A673 (cell line): ENCODE measurements at regions of chr12 and their contacts with region 1.

Region 1: GRCh38 chr12:89524541-89525285 is at the start of gene GALNT4:
- DNase-seq: peak; percentile 94
- H3K4me3 ChIP-seq: peak within 1 kb of the TSS; percentile 82
- H3K27ac ChIP-seq: peak within 1 kb of the TSS; percentile 86
- H3K4me1 ChIP-seq: peaks cover 35% of the 10 kb centered on the region
- H3K27me3 ChIP-seq: no peaks in the 10 kb centered on the region
- CTCF ChIP-seq: peak; percentile 83
- total RNA-seq, gene GALNT4: 13.2 and 14.3 TPM in 2 replicates

Region 2: DNA sequence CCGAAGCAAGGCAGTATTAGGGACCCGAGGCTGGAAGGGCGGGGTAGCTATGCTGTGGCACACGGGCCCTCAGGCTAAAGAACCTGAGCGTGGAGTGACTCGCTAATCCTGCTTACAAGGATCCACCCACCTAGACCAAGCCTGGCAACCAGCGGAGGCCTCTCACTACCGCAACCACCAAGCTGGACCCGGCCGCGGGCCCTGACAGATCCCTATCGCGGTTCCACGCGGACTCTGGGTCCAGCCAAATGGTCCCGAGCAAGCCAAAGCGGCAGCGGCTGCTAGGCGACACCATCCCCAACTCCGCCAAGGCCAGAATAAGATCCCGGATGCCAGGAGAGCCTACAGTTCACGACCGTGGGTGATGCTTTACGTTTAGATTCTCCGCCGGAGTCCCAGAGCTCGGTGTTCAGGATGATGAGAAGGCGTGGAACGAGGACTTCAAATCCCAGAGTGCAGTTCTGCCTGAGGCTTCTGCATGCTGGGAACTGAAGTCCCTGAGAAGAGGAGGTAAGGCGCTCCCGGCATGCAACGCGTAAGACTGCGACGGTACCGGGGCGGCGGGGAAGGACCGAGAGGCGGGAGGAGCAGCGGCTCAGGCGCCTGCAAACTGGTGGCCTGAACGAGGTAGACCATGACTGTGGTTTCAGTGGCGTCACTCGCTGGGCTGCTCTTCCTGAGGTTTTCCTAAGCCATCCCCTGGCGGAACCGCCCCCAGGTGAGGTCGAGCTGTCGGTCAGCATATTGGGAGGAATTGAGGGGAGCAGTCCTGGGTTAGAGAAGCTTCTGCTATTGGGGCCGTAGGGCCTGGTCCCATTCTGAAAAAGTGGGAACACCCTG is 1382.7 kb before region 1 on chr12 and contains the starts of genes CEP290 and TMTC3:
- CTCF ChIA-PET with region 1: no interaction called
- POLR2A ChIA-PET with region 1: no interaction called
- intact Hi-C with region 1: loop called (anchors 5 kb)
- DNase-seq: peak; percentile 99
- H3K4me3 ChIP-seq: peak within 1 kb of the TSS; percentile 79
- H3K27ac ChIP-seq: peak within 1 kb of the TSS; percentile 71
- H3K4me1 ChIP-seq: peaks cover 22% of the 10 kb centered on the region
- H3K27me3 ChIP-seq: no peaks in the 10 kb centered on the region
- CTCF ChIP-seq: no peak
- total RNA-seq, gene CEP290: 27.2 and 27.3 TPM in 2 replicates
- total RNA-seq, gene TMTC3: 31.6 and 33.6 TPM in 2 replicates

Region 3: GRCh38 chr12:88638966-88639760 is 885.5 kb before region 1 on chr12:
- CTCF ChIA-PET with region 1: no interaction called
- POLR2A ChIA-PET with region 1: no interaction called
- intact Hi-C with region 1: loop called (anchors 10 kb)
- DNase-seq: peak; percentile 57
- H3K4me3 ChIP-seq: peak overlapping the region; percentile 23
- H3K27ac ChIP-seq: peak overlapping the region; percentile 80
- H3K4me1 ChIP-seq: peaks cover 21% of the 10 kb centered on the region
- H3K27me3 ChIP-seq: no peaks in the 10 kb centered on the region
- CTCF ChIP-seq: no peak

Region 4: GRCh38 chr12:89345830-89346740 is 178.6 kb before region 1 on chr12:
- CTCF ChIA-PET with region 1: no interaction called
- POLR2A ChIA-PET with region 1: no interaction called
- intact Hi-C with region 1: loop called (anchors 2 kb)
- DNase-seq: peak; percentile 99
- H3K4me3 ChIP-seq: peak overlapping the region; percentile 11
- H3K27ac ChIP-seq: peak overlapping the region; percentile 97
- H3K4me1 ChIP-seq: peaks cover 47% of the 10 kb centered on the region
- H3K27me3 ChIP-seq: no peaks in the 10 kb centered on the region
- CTCF ChIP-seq: no peak

Region 5: DNA sequence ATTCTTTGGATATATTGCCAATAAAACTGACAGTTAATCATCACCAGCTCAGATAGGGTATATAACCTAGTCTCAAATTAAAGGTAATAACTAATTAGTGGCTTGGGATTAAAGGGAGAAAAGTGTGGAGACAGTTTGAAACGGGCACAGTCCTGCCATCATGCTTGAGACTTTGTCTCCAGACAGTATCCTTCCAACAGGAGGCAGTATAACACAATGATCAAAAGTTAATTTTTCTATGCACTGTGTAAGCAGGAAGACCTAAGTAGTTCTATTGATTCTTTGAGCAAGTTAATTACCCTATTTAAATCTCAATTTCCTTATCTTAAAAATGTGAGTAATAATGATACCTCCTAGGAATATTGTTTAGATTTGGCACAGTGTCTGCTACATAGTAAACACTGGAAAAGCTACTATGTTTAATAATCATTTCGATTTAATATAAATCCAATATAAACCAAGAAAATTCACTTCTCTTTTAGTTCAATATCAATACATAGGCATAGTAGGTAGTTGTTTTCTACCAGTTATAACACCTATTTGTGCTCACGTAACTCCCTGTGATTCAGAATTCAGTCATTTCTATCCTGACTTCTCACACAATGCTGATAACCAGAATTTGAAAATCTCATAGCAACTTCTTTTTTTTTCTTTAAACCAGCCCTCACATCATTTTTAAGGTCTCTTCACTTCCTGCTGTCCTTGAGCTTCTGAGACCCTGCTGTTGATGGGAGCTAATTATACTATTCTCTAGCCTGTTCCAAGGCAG is 53.8 kb before region 1 on chr12:
- CTCF ChIA-PET with region 1: no interaction called
- POLR2A ChIA-PET with region 1: interaction called, 3 read pairs
- intact Hi-C with region 1: loop called (anchors 2 kb)
- DNase-seq: peak; percentile 73
- H3K4me3 ChIP-seq: no peak overlapping the region
- H3K27ac ChIP-seq: no peak overlapping the region
- H3K4me1 ChIP-seq: peaks cover 23% of the 10 kb centered on the region
- H3K27me3 ChIP-seq: no peaks in the 10 kb centered on the region
- CTCF ChIP-seq: peak; percentile 76

Region 6: DNA sequence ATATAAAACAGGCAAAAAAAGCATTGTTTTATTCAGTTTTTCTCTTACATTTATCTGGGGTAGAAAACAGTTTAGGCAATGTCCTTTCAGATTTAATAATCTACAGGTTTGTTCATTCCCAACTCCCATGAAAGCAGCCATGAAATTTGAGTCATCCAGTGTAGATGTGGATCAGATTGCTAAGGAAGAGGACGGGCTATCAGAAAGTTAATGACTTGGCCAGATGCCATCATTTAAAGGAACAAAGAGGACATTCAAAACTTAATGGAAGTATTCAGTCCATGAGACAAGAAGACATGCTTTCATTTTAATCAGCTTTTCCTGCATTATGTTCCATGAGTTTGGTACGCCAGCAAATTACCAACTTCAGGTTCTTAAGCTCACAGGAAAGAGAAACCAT is 32.3 kb after region 1 on chr12:
- CTCF ChIA-PET with region 1: no interaction called
- POLR2A ChIA-PET with region 1: no interaction called
- intact Hi-C with region 1: no loop called
- DNase-seq: peak; percentile 58
- H3K4me3 ChIP-seq: no peak overlapping the region
- H3K27ac ChIP-seq: no peak overlapping the region
- H3K4me1 ChIP-seq: no peaks in the 10 kb centered on the region
- H3K27me3 ChIP-seq: no peaks in the 10 kb centered on the region
- CTCF ChIP-seq: no peak